ENCODE measurements at regions of chr2 and their contacts with region 1.

Region 1: GRCh38 chr2:42859006-42859552 is 66.7 kb upstream of the HAAO start:
- DNase-seq: peak in 8 of 9 experiments; percentile 46 to 71 (median 67)
- ATAC-seq: no peak
- H3K4me3 ChIP-seq: no peak overlapping the region
- H3K4me3 Mint-ChIP-seq: no peak overlapping the region
- H3K27ac ChIP-seq: no peak overlapping the region
- H3K27ac Mint-ChIP-seq: no peak overlapping the region
- H3K4me1 ChIP-seq: no peaks in the 10 kb centered on the region
- H3K4me1 Mint-ChIP-seq: no peaks in the 10 kb centered on the region
- H3K27me3 ChIP-seq: no peaks in the 10 kb centered on the region
- H3K27me3 Mint-ChIP-seq: no peaks in the 10 kb centered on the region
- CTCF ChIP-seq: peak; percentile 71

Region 2: DNA sequence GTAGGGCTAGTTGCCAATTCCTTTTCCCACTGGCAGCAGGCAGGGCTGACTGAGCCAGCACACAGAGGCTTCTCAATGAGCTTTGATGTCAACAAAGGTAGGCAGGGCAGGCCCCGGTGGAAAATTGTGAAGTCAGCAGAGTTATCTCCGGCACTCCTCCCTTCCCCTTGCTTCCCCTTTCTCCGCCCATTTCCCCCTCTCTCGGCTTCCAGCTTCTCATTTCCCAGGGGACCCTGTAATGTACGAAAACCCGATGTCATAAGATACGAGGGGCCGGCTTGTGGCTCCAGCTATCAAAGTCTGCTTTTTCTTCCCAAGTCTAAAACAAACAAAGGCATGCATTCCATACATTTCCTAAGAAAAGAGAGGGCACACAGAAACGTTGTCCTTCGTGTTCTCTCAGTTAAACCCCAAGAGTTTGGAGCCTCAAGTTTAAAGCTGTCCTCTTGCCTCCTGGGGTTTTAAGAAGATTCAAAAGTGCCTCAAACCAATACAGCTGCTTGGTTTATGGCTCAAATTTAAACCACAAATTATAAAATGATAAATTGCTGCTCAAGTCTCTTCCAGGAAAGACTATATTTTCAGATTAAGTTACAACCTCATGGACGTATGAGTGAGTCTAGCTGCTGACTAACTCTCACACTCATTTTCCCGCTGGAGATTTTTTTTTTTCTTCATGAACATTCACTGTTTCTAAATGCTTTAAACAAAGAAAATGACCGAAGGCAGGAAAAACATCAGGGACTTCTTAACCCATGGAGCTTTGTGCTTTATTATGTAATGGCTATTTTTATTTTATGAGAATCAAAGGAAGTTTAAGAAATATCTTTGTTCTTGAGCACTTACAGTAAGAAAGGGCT is 717.2 kb before region 1 on chr2:
- CTCF ChIA-PET with region 1: no interaction called
- POLR2A ChIA-PET with region 1: no interaction called
- intact Hi-C with region 1: no loop called
- DNase-seq: peak in 2 of 9 experiments; percentile 24 to 33
- ATAC-seq: peak; percentile 44
- H3K4me3 ChIP-seq: no peak overlapping the region
- H3K4me3 Mint-ChIP-seq: peak overlapping the region; percentile 37
- H3K27ac ChIP-seq: no peak overlapping the region
- H3K27ac Mint-ChIP-seq: peak overlapping the region; percentile 27
- H3K4me1 ChIP-seq: peaks cover 31% of the 10 kb centered on the region
- H3K4me1 Mint-ChIP-seq: peaks cover 46% of the 10 kb centered on the region
- H3K27me3 ChIP-seq: no peaks in the 10 kb centered on the region
- H3K27me3 Mint-ChIP-seq: no peaks in the 10 kb centered on the region
- CTCF ChIP-seq: no peak

Region 3: DNA sequence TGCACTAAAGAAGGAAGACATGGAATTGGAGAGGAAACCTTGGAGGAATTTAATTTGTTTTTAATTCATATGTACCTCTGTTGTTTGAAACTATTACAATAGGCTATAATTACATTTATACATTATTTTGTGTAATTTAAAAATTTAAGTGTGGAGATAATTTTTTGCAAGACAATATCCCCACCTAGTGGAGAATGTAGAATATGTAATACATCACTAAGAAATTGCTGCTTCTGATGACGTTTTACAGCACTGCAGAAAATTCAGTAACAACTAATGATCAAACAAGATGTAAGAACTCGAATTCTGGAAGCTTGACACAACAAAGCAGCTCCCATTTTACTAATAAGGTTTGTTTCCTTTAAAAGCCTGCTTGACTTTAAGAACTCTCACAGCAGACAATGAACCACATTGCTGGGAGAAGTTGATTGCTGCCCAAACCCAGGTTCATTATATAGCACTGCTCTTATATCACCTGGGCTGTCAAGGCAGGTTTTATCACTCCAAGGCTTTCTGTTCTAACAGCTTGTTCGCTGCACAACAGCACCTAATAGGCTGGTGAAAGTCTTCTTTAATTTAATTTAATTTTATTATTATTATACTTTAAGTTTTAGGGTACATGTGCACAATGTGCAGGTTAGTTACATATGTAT is 683.3 kb after region 1 on chr2:
- CTCF ChIA-PET with region 1: interaction called, 9 read pairs
- POLR2A ChIA-PET with region 1: no interaction called
- intact Hi-C with region 1: loop called (anchors 1 to 2 kb)
- DNase-seq: peak in 2 of 9 experiments; percentile 48 to 66
- ATAC-seq: peak; percentile 88
- H3K4me3 ChIP-seq: no peak overlapping the region
- H3K4me3 Mint-ChIP-seq: no peak overlapping the region
- H3K27ac ChIP-seq: no peak overlapping the region
- H3K27ac Mint-ChIP-seq: no peak overlapping the region
- H3K4me1 ChIP-seq: no peaks in the 10 kb centered on the region
- H3K4me1 Mint-ChIP-seq: peaks cover 16% of the 10 kb centered on the region
- H3K27me3 ChIP-seq: no peaks in the 10 kb centered on the region
- H3K27me3 Mint-ChIP-seq: no peaks in the 10 kb centered on the region
- CTCF ChIP-seq: peak; percentile 87

Region 4: GRCh38 chr2:43576981-43577892 is 718.2 kb after region 1 on chr2:
- CTCF ChIA-PET with region 1: interaction called, 20 read pairs
- POLR2A ChIA-PET with region 1: no interaction called
- intact Hi-C with region 1: loop called (anchors 1 kb)
- DNase-seq: peak in 4 of 9 experiments; percentile 20 to 74 (median 50)
- ATAC-seq: peak; percentile 63
- H3K4me3 ChIP-seq: no peak overlapping the region
- H3K4me3 Mint-ChIP-seq: no peak overlapping the region
- H3K27ac ChIP-seq: no peak overlapping the region
- H3K27ac Mint-ChIP-seq: no peak overlapping the region
- H3K4me1 ChIP-seq: no peaks in the 10 kb centered on the region
- H3K4me1 Mint-ChIP-seq: peaks cover 3% of the 10 kb centered on the region
- H3K27me3 ChIP-seq: no peaks in the 10 kb centered on the region
- H3K27me3 Mint-ChIP-seq: no peaks in the 10 kb centered on the region
- CTCF ChIP-seq: peak; percentile 86

Region 5: GRCh38 chr2:43611987-43612894 is 753.2 kb after region 1 on chr2:
- CTCF ChIA-PET with region 1: interaction called, 4 read pairs
- POLR2A ChIA-PET with region 1: no interaction called
- intact Hi-C with region 1: loop called in 1 of 2 experiments (anchors 5 kb)
- DNase-seq: peak; percentile 52 to 81 (median 72)
- ATAC-seq: peak; percentile 99
- H3K4me3 ChIP-seq: no peak overlapping the region
- H3K4me3 Mint-ChIP-seq: no peak overlapping the region
- H3K27ac ChIP-seq: no peak overlapping the region
- H3K27ac Mint-ChIP-seq: no peak overlapping the region
- H3K4me1 ChIP-seq: no peaks in the 10 kb centered on the region
- H3K4me1 Mint-ChIP-seq: no peaks in the 10 kb centered on the region
- H3K27me3 ChIP-seq: no peaks in the 10 kb centered on the region
- H3K27me3 Mint-ChIP-seq: peaks cover 7% of the 10 kb centered on the region
- CTCF ChIP-seq: peak; percentile 74